Thyroid gland (tissue), 4 donors: ENCODE measurements at regions of chr1 and their contacts with region 1.

Region 1: DNA sequence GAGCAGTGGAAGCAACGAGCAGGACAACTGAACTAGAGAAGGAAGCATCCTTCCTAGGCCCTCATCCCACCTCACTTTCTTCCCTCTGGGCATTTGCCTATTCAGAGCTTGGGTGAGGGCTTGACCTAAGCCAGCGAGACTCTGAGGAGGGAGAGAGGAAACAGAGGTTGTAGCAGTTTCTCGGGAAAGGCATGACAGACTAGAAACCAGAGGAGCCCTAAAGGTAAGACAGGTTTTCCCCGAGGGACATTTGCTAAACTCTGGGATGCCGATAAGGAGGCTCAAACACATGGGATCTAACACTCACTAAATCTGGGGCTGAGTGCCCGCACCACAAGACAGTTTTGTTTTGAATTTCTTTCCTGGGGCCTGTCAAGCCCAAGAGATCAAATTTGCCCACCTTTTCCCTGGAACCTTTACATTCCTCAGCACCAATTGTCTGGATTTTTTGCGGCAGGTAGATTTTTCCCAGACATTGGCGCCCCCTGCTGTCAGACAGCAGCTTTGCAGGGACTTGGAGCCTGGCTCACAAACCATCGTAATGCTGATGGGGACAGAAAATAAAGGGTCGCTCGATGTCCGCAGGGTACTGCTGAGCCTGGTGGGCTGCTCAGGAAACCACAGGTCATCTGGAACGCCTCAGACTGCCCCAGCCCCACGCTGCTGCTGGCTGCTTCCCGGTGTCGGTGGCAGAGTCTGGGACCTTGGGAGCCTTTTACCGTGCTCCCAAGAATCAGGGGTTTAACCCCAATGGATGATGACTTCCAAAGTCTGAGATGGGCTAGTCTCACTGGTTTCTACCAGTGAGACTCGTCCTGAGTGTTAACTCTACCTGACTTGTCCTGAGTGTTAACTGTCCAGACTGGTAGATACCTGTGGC is 23.4 kb upstream of the TSPAN2 start:
- DNase-seq: peak; percentile 35 to 61
- H3K4me3 ChIP-seq: no peak overlapping the region
- H3K27ac ChIP-seq: no peak overlapping the region
- H3K4me1 ChIP-seq: peaks cover 7 to 18% of the 10 kb centered on the region in 2 donors
- H3K27me3 ChIP-seq: no peaks in the 10 kb centered on the region
- CTCF ChIP-seq: peak; percentile 82 to 96 (median 90)
- POLR2A ChIP-seq: no peak

Region 2: DNA sequence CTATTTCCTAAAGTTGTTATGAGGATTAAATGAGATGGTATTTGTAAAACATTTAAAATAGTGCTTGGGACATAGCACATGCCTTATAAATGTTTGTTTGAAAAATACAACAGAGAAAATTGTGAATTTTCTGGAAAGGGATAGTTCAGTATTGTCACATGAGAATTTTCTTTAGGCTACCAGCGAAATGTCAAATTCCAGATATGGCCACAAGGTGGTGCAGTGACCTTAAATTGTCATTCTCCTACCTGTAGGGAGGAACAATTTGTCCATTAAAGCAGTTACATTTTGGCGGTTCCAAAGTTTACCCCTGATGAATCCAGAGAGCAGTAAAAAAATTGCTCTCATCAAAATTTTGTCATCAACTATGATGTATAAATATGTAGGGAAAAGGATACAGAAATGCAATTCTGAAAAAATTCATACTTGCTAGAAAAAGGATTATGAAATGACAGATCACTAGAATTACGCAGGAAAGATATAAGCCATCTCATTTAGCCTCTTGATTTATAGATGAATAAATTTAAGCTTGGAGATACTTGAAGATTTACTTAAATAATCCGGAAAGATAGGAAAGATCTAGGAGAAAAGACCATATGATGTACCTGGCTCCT is 133.4 kb before region 1 on chr1:
- intact Hi-C with region 1: loop called (anchors 2 kb)
- DNase-seq: peak; percentile 73
- H3K4me3 ChIP-seq: no peak overlapping the region
- H3K27ac ChIP-seq: no peak overlapping the region
- H3K4me1 ChIP-seq: no peaks in the 10 kb centered on the region
- H3K27me3 ChIP-seq: no peaks in the 10 kb centered on the region
- CTCF ChIP-seq: peak; percentile 64 to 87 (median 80)
- POLR2A ChIP-seq: no peak

Region 3: DNA sequence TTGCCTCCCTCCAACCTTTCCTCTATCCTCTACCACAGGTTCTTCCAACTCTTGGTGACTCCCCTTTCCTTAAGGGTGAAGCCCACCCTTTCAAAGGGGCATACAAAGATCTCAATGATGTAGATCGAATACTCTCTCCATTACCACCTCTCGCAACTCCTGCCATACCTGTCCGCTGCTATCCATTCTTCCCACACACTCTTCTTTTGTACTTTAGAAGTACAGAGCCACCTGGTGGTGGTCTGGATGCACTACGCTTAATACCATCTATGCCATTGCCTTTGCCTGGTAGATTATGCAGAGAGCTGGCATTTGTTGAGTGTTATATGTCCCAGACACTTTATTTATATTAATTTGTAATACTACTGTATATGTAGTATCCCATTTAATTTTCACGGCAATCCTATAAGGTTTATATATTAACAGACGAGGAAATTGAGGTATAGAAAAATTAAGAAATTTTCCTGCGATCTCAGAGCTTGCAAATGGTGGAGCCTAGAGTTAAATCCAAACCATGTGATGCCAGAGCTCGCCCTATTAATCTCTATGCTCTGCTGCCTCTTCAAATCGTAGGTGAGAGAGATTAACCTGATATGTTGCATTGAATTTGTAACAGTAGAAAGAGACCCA is 60.2 kb before region 1 on chr1:
- intact Hi-C with region 1: loop called (anchors 10 kb)
- DNase-seq: peak; percentile 73 to 76
- H3K4me3 ChIP-seq: no peak overlapping the region
- H3K27ac ChIP-seq: no peak overlapping the region
- H3K4me1 ChIP-seq: peaks cover 20 to 25% of the 10 kb centered on the region in 2 donors
- H3K27me3 ChIP-seq: no peaks in the 10 kb centered on the region
- CTCF ChIP-seq: peak; percentile 27 to 86 (median 79)
- POLR2A ChIP-seq: no peak

Region 4: DNA sequence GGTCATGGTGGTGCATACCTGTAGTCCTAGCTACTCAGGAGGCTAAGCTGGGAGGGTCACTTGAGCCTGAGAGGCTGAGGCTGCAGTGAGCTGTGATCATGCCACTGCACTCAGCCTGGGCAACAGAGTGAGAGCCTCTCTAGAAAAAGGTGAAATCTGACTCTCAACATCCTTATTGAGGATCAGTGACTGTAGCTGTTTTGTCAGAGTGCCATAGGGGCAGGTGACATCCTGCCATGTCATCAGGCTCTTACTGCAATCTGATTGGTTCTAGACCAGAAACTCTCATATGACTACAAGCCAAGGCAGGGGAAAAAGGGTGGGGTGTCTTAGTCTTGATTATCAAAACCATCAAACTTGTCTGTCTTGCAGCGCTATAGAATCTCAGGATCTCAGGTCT is 288.2 kb after region 1 on chr1:
- intact Hi-C with region 1: no loop called
- DNase-seq: no peak
- H3K4me3 ChIP-seq: no peak overlapping the region
- H3K27ac ChIP-seq: no peak overlapping the region
- H3K4me1 ChIP-seq: peaks cover 17 to 21% of the 10 kb centered on the region in 2 donors
- H3K27me3 ChIP-seq: no peaks in the 10 kb centered on the region
- CTCF ChIP-seq: no peak
- POLR2A ChIP-seq: no peak